Spleen (tissue), 13 donors: ENCODE measurements at regions of chr10 and their contacts with region 1.

Region 1: GRCh38 chr10:26755443-26755903 is 58.0 kb downstream of the PDSS1 start:
- DNase-seq: no peak
- H3K4me3 ChIP-seq: no peak overlapping the region
- H3K27ac ChIP-seq: peak overlapping the region in 5 of 8 donors; percentile 12 to 65 (median 28)
- H3K4me1 ChIP-seq: peaks cover 0 to 15% (median 9%) of the 10 kb centered on the region in 6 donors
- H3K27me3 ChIP-seq: no peaks in the 10 kb centered on the region
- CTCF ChIP-seq: no peak
- POLR2A ChIP-seq: no peak

Region 2: GRCh38 chr10:26839966-26840627 is 84.6 kb after region 1 on chr10:
- intact Hi-C with region 1: loop called (anchors 10 kb)
- DNase-seq: no peak
- H3K4me3 ChIP-seq: no peak overlapping the region
- H3K27ac ChIP-seq: peak overlapping the region in 1 of 8 donors; percentile 0
- H3K4me1 ChIP-seq: peaks cover 21 to 83% (median 60%) of the 10 kb centered on the region in 6 donors
- H3K27me3 ChIP-seq: no peaks in the 10 kb centered on the region
- CTCF ChIP-seq: no peak
- POLR2A ChIP-seq: no peak

Region 3: DNA sequence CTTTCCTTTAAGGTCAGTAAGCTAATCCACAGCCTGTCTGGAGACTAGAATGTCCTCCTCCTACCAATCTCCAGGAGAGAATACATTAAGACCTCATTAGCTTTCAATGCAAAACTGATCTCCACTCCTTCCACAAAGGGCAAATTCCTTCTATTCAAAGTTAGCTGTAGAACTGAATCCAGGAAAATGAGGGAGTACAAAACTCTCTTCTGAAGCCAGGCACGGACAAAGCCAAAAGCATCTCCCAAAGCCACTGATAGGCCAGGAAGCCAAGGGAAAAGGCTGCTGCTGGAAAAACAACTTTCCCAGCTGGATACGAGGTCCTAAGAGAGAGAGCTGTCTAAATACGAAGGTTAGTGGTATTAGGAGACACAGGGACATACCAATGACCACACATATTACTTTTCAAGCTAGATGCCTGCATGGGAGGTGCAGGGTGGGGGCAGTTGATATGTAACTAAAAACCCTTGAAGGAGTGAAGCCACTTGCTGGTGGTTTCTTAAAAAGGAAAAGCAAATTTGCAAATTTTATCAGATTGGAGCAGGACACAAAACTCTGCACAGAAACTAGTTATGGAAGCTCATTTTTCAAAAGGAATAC is 946.6 kb after region 1 on chr10:
- intact Hi-C with region 1: no loop called
- DNase-seq: no peak
- H3K4me3 ChIP-seq: no peak overlapping the region
- H3K27ac ChIP-seq: no peak overlapping the region
- H3K4me1 ChIP-seq: no peaks in the 10 kb centered on the region
- H3K27me3 ChIP-seq: peaks cover 0 to 6% (median 0%) of the 10 kb centered on the region in 7 donors
- CTCF ChIP-seq: no peak
- POLR2A ChIP-seq: no peak